ENCODE measurements at regions of chr4 and their contacts with region 1.

Region 1: GRCh38 chr4:56907489-56908205 is at the start of gene REST:
- DNase-seq: peak; percentile 72 to 89 (median 85)
- H3K4me3 ChIP-seq: peak within 1 kb of the TSS; percentile 66
- H3K27ac ChIP-seq: peak within 1 kb of the TSS; percentile 90 to 91
- H3K4me1 ChIP-seq: peaks cover 10% of the 10 kb centered on the region
- H3K27me3 ChIP-seq: no peaks in the 10 kb centered on the region
- CTCF ChIP-seq: no peak
- EP300 ChIP-seq: no peak
- POLR2A ChIP-seq: peak; percentile 52
- total RNA-seq, gene REST: 23.6 to 43.7 (median 33.8) TPM

Region 2: GRCh38 chr4:56821381-56822243 is 86.0 kb before region 1 on chr4 and contains the start of gene SPINK2:
- intact Hi-C with region 1: no loop called
- DNase-seq: no peak
- H3K4me3 ChIP-seq: peak within 1 kb of the TSS; percentile 23
- H3K27ac ChIP-seq: no peak within 1 kb of the TSS
- H3K4me1 ChIP-seq: no peaks in the 10 kb centered on the region
- H3K27me3 ChIP-seq: no peaks in the 10 kb centered on the region
- CTCF ChIP-seq: no peak
- EP300 ChIP-seq: no peak
- POLR2A ChIP-seq: no peak
- total RNA-seq, gene SPINK2: 0.62 TPM in 1 of 7 donors, not detected in the others

Region 3: DNA sequence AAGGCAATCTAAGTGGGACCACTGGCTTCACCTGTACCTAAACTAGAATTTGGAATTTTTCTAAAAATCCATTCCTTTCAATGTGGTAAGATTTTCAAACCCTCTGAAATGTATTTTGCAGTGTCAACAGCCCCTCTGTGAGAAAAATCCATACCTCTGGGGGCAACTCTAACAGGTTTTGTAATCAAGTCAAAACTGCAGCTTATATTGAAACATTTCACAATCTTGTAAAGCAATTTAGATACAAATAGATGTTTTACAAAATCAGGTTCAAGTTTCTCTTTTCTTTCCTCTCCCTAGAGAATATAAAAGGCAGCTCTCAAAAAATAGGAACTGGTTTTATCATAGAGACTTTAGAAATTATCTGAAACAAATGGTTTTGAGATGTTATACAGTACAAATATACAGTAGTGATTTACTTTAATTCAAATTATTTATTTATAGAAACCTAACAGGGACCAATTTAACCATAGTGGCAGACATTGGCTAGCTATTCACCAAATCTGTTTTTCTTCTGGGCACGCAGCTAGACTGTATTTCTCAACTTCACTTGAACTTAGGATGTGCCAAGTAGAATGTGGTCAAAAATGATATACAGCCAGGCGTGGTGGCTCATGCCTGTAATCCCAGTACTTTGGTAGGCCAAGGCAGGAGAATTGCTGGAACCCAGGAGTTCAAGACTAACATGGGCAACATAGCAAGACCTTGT is 49.9 kb before region 1 on chr4:
- intact Hi-C with region 1: no loop called
- DNase-seq: no peak
- H3K4me3 ChIP-seq: no peak overlapping the region
- H3K27ac ChIP-seq: no peak overlapping the region
- H3K4me1 ChIP-seq: no peaks in the 10 kb centered on the region
- H3K27me3 ChIP-seq: no peaks in the 10 kb centered on the region
- CTCF ChIP-seq: no peak
- EP300 ChIP-seq: no peak
- POLR2A ChIP-seq: no peak

Region 4: DNA sequence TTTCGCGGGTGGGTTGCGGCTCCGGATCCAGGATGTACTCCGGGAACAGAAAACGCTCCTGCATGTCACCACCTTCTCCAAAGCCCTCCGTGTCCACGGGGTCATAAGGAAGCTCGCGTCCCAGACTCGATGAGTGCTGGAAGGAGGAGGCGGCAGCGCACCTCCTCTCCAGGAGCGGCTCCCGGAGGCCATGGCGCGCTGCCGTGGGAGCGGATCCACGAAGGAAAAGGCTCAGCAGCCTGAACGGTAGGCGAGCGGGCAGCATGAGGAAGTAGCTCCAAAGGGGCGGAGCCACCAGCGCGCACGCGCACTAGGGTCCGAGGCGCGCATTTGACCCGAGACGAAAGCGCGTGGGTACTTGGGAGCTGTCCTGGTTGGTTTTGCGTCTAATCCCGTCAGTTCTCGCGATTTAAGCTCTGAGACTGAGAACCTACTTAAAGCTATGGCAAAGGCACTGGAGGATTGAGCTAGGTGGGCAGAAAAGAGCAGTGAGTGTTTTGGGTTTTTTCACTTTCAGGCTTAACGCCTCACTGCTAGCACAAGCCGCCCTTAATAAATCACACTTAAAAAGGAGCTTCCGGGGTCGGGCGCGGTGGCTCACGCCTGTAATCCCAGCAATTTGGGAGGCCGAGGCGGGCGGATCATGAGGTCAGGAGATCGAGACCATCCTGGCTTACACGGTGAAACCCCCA is 69.8 kb after region 1 on chr4 and contains the start of gene NOA1:
- intact Hi-C with region 1: loop called in 1 of 4 experiments (anchors 5 kb)
- DNase-seq: peak; percentile 96 to 99 (median 98)
- H3K4me3 ChIP-seq: peak within 1 kb of the TSS; percentile 90
- H3K27ac ChIP-seq: peak within 1 kb of the TSS; percentile 70 to 88
- H3K4me1 ChIP-seq: peaks cover 20% of the 10 kb centered on the region
- H3K27me3 ChIP-seq: no peaks in the 10 kb centered on the region
- CTCF ChIP-seq: no peak
- EP300 ChIP-seq: no peak
- POLR2A ChIP-seq: peak; percentile 43
- total RNA-seq, gene NOA1: 12.6 to 21.5 (median 18.5) TPM